Activated CD4-positive, alpha-beta T cell treated with anti-CD3 and anti-CD28 coated beads, Interleukin-2, amount 10 ng/mL, durations not matched to agents 24 days and 14 days (primary cell): ENCODE measurements at regions of chr3 and their contacts with region 1.

Region 1: GRCh38 chr3:187112934-187113793 is 26.1 kb downstream of the RPL39L start:
- DNase-seq: peak; percentile 74
- H3K4me3 Mint-ChIP-seq: no peak overlapping the region
- H3K27ac Mint-ChIP-seq: peak overlapping the region; percentile 6
- H3K4me1 Mint-ChIP-seq: peaks cover 7% of the 10 kb centered on the region
- H3K27me3 Mint-ChIP-seq: no peaks in the 10 kb centered on the region

Region 2: DNA sequence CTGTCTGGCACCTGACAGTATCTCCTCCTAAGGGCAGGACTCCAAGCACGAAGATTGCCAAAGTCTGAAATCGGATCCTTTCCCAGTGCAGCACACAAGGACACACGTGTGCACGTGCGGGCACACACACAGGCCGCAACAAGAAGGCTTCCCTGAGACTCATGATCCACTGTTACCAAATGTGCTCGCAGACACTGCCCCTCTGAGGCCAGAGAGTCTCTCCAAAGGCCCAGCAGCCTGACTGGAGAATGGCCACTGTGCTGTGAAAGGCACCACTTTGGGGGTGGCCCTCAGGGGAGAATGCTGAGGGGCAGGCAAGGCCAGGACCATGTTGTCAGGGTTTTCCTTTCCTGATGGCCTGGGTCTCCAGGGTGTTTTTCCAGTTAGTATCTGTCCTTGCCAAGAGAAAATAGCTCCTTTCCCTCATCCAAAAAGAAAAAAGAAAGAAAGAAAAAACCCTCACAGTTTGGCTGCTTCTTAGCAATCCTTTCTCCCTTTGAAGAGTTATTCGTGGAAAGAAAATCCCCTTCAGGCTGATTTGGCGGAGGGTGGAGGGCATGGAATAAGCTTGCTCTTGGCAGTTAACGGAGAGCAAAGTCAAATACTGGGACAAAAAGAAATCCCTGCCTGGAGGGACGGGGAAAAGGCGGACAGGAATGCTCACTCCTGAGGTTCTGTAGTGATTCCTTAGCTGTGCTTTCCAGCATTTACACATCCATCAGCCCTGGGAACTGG is 892.1 kb before region 1 on chr3:
- intact Hi-C with region 1: no loop called
- DNase-seq: no peak
- H3K4me3 Mint-ChIP-seq: no peak overlapping the region
- H3K27ac Mint-ChIP-seq: no peak overlapping the region
- H3K4me1 Mint-ChIP-seq: peaks cover 13% of the 10 kb centered on the region
- H3K27me3 Mint-ChIP-seq: peaks cover 43% of the 10 kb centered on the region

Region 3: GRCh38 chr3:187150599-187150998 is 37.4 kb after region 1 on chr3:
- intact Hi-C with region 1: loop called (anchors 1 kb)
- DNase-seq: peak; percentile 88
- H3K4me3 Mint-ChIP-seq: no peak overlapping the region
- H3K27ac Mint-ChIP-seq: no peak overlapping the region
- H3K4me1 Mint-ChIP-seq: peaks cover 4% of the 10 kb centered on the region
- H3K27me3 Mint-ChIP-seq: peaks cover 44% of the 10 kb centered on the region

Region 4: DNA sequence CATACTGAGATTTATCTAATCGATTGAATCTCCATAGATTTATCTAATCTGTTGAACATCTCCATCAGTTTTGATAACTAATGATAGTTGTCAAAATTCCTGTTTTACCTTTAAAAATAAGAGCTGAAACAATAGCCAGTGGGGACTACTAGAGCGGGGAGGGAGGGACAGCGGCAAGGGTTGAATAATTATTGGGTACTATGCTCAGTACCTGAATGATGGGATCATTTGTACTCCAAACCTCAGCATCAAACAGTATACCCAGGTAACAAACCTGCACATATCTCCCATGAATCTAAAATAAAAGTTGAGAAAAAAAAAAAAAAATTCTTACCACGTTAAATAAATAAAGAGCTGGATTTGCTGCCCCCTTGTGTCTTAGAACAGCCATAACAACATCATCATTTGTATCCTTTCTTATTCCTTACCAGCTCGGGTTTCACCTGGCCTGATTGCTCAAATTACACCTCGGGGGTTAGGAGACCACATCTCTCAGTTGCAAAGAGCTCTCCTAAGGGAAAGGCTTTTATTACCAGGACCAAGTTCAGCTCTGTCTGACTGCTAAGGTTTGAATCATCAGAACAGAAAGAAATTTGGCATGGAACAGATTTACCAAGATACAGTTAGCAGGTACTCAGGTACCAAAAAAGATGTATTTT is 51.9 kb after region 1 on chr3:
- intact Hi-C with region 1: loop called (anchors 1 kb)
- DNase-seq: peak; percentile 82
- H3K4me3 Mint-ChIP-seq: no peak overlapping the region
- H3K27ac Mint-ChIP-seq: no peak overlapping the region
- H3K4me1 Mint-ChIP-seq: peaks cover 4% of the 10 kb centered on the region
- H3K27me3 Mint-ChIP-seq: peaks cover 44% of the 10 kb centered on the region